PC-9 (cell line): ENCODE measurements at regions of chr15 and their contacts with region 1.

Region 1: DNA sequence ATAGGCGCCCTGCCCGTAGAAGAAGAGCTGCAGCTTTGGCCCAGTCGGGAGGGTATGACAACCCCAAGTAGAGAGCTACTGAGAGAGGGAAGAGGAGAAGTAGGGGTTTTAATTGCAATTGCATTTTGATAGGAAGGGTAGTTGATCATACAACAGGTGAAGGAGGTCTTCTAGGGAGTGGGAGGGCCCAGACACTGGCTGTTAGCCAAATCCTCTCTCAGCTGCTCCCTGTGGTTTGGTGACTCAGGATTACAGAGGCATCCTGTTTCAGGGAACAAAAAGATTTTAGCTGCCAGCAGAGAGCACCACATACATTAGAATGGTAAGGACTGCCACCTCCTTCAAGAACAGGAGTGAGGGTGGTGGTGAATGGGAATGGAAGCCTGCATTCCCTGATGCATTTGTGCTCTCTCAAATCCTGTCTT is 408.9 kb upstream of the THBS1 start:
- DNase-seq: peak; percentile 85 to 88
- H3K4me3 ChIP-seq: no peak overlapping the region
- H3K27ac ChIP-seq: peak overlapping the region; percentile 34; the same call in 1 of the 2 replicates
- H3K4me1 ChIP-seq: peaks cover 12% of the 10 kb centered on the region
- H3K27me3 ChIP-seq: no peaks in the 10 kb centered on the region
- CTCF ChIP-seq: peak; percentile 66

Region 2: GRCh38 chr15:38490242-38490922 is 681.6 kb before region 1 on chr15:
- CTCF ChIA-PET with region 1: no interaction called
- POLR2A ChIA-PET with region 1: no interaction called
- intact Hi-C with region 1: no loop called
- DNase-seq: no peak
- H3K4me3 ChIP-seq: no peak overlapping the region
- H3K27ac ChIP-seq: no peak overlapping the region
- H3K4me1 ChIP-seq: no peaks in the 10 kb centered on the region
- H3K27me3 ChIP-seq: no peaks in the 10 kb centered on the region
- CTCF ChIP-seq: no peak

Region 3: GRCh38 chr15:38868326-38869114 is 303.4 kb before region 1 on chr15:
- CTCF ChIA-PET with region 1: no interaction called
- POLR2A ChIA-PET with region 1: no interaction called
- intact Hi-C with region 1: loop called (anchors 1 kb)
- DNase-seq: peak; percentile 72 to 80
- H3K4me3 ChIP-seq: no peak overlapping the region
- H3K27ac ChIP-seq: peak overlapping the region; percentile 40
- H3K4me1 ChIP-seq: peaks cover 7% of the 10 kb centered on the region
- H3K27me3 ChIP-seq: no peaks in the 10 kb centered on the region
- CTCF ChIP-seq: no peak

Region 4: DNA sequence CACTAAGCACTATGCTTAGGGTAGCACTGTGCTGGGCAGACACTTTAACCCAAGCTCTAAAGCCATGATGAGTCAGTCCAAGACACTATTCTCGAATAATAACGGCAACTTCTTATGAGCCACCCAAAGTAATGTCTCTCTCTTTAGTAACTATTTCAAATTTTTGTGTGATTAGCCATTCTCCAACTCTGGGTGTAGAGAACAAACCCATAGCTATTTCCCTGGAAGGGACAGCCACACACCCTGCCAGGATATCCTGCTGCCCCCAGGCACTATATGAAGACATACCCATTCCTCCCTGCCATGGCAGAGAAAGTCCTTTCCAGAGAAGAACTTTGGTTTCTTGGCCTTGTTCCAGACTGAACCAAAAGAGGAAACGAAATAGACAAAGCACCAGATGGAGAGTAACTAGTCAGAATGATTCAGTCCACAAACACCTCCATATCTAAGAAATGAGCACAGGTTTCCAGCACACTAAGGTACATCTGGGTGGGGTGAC is 24.1 kb after region 1 on chr15:
- CTCF ChIA-PET with region 1: interaction called, 4 read pairs
- POLR2A ChIA-PET with region 1: no interaction called
- intact Hi-C with region 1: loop called (anchors 1 kb)
- DNase-seq: peak; percentile 86 to 97
- H3K4me3 ChIP-seq: no peak overlapping the region
- H3K27ac ChIP-seq: peak overlapping the region; percentile 79
- H3K4me1 ChIP-seq: peaks cover 32% of the 10 kb centered on the region
- H3K27me3 ChIP-seq: no peaks in the 10 kb centered on the region
- CTCF ChIP-seq: no peak

Region 5: GRCh38 chr15:39301589-39301999 is 129.6 kb after region 1 on chr15:
- CTCF ChIA-PET with region 1: no interaction called
- POLR2A ChIA-PET with region 1: no interaction called
- intact Hi-C with region 1: loop called (anchors 2 kb)
- DNase-seq: no peak
- H3K4me3 ChIP-seq: no peak overlapping the region
- H3K27ac ChIP-seq: no peak overlapping the region
- H3K4me1 ChIP-seq: peaks cover 20% of the 10 kb centered on the region
- H3K27me3 ChIP-seq: no peaks in the 10 kb centered on the region
- CTCF ChIP-seq: no peak

Region 6: DNA sequence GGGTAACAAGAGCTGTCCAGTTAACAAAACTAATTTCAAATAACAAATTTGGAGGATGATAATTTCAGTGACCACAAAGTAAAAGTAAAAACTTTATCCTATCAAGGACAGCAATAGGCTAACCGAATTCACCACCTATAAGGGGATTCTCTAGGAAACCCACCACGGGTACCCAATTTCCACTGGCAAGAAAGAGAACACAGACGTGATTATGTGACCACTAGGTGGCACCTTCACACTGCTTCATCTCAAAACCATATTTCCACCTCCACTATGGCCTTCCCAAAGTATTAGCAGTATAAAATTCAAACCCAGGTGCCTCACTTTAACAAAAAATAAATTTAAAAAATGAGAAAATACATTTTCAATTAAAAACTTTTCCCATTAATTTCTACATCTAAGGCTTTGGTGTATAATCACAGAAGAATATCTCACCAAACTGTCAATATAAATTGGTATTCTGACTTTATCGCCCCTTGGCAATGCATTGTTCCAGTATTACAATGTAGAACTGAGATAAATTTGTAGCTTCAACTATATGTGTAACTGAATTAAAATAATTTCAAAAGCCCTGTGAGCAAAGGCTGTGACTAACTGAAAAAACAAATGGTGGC is 514.2 kb after region 1 on chr15:
- CTCF ChIA-PET with region 1: no interaction called
- POLR2A ChIA-PET with region 1: no interaction called
- intact Hi-C with region 1: loop called (anchors 5 kb)
- DNase-seq: peak in 1 of 2 experiments; percentile 34
- H3K4me3 ChIP-seq: no peak overlapping the region
- H3K27ac ChIP-seq: no peak overlapping the region
- H3K4me1 ChIP-seq: no peaks in the 10 kb centered on the region
- H3K27me3 ChIP-seq: no peaks in the 10 kb centered on the region
- CTCF ChIP-seq: peak; percentile 82